ENCODE measurements at regions of chr4 and their contacts with region 1.

Region 1: DNA sequence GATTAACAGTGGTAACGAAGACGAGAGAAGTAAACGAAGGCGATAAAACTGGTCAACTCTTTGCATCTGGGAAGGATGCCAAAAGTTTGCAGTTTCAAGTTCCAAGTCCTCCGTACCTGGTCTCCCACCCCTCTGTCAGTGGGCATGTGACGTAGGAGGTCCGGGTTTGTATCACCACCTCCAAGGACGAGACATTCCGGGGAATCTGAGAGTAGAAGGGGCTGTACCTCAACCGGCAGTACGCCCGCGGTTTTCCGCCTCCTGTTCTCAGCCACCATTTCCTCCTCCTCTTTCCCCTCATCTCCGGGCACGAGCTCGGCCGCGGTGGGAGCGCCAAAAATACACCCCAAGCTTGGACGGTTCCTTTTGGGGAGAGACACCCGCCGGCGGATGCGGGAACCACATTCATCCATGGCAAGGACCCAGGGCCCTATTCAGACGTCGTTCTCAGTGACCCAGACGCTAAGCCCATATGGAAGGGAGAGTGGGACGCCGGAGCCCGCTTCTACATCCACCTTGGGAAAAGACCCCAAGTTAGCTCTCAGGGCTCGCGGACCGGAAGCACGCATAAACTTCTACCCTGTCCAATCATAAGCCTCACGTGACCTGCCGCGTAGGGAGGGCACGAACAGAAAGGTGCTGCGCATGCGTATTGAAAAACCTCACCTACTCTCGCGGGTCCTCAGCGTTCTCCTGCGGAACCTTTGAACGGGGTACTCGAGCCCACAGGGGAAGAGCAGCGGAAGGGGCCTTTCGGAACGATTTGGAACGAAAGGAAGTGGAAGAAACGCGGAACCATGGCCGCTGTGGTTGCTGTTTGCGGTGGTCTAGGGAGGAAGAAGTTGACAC is at the starts of genes HELQ and MRPS18C:
- DNase-seq: peak; percentile 94 to 99
- H3K4me3 ChIP-seq: peak within 1 kb of the TSS; percentile 85 to 89
- H3K27ac ChIP-seq: peak within 1 kb of the TSS; percentile 98 to 99
- H3K4me1 ChIP-seq: peaks cover 0 to 14% of the 10 kb centered on the region in 2 donors
- H3K27me3 ChIP-seq: no peaks in the 10 kb centered on the region
- CTCF ChIP-seq: peak in 2 of 3 experiments; percentile 26 to 42
- total RNA-seq, gene HELQ: 1.1 TPM
- total RNA-seq, gene MRPS18C: 13.0 TPM

Region 2: DNA sequence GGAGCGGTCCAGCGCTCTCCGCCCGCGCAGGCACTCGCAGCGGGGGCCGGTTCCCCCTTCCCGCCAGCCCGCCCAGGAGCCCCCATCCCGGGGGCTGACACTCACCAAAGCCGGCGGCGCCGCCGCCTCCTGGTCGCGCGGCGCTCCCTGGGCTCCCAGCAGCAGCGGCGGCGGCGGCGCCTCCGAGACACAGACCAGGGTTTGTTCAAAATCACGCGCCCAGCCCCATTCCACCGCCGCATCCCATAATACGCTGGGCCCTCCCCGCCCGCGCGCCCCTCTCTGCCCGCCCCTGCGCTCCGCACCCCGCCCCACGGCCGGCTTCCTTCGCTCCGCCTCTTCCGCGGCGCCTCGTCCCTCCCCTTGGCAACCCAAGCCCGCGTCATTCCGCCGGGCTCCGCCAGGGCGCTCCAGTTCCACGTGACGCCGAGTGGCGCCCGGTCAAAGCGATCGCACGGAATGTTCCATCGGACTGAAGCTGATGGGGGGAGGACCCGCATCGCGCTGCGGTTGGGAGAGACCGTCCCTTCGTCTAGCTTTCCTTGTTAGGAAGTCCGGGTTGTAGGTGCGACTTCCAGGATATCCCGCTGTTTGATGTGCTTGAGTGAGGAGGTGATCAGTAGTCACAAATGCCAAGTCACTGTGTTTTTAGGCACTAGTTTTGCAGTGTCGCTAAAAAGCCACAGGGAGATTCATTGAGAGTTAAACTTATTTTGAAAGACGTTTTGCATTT is 442.7 kb before region 1 on chr4:
- intact Hi-C with region 1: loop called (anchors 10 kb)
- DNase-seq: peak; percentile 75 to 97
- H3K4me3 ChIP-seq: peak overlapping the region; percentile 78 to 88
- H3K27ac ChIP-seq: peak overlapping the region; percentile 71 to 89
- H3K4me1 ChIP-seq: peaks cover 0 to 19% of the 10 kb centered on the region in 2 donors
- H3K27me3 ChIP-seq: no peaks in the 10 kb centered on the region
- CTCF ChIP-seq: peak; percentile 60 to 70 (median 63)

Region 3: GRCh38 chr4:83334425-83335241 is 120.9 kb before region 1 on chr4 and contains the start of gene HPSE:
- intact Hi-C with region 1: loop called (anchors 1 kb)
- DNase-seq: peak; percentile 54 to 91
- H3K4me3 ChIP-seq: peak within 1 kb of the TSS; percentile 66 to 86
- H3K27ac ChIP-seq: no peak within 1 kb of the TSS
- H3K4me1 ChIP-seq: peaks cover 3 to 5% of the 10 kb centered on the region in 2 donors
- H3K27me3 ChIP-seq: no peaks in the 10 kb centered on the region
- CTCF ChIP-seq: no peak
- total RNA-seq, gene HPSE: 1.7 TPM

Region 4: GRCh38 chr4:83535520-83536361 is 80.2 kb after region 1 on chr4 and contains the start of gene GPAT3:
- intact Hi-C with region 1: loop called (anchors 5 kb)
- DNase-seq: peak; percentile 19 to 90
- H3K4me3 ChIP-seq: peak within 1 kb of the TSS; percentile 82 to 86
- H3K27ac ChIP-seq: peak within 1 kb of the TSS; percentile 35 to 66
- H3K4me1 ChIP-seq: no peaks in the 10 kb centered on the region
- H3K27me3 ChIP-seq: no peaks in the 10 kb centered on the region
- CTCF ChIP-seq: no peak
- total RNA-seq, gene GPAT3: 1.5 TPM

Region 5: GRCh38 chr4:83569987-83570386 is 114.5 kb after region 1 on chr4:
- intact Hi-C with region 1: no loop called
- DNase-seq: no peak
- H3K4me3 ChIP-seq: no peak overlapping the region
- H3K27ac ChIP-seq: no peak overlapping the region
- H3K4me1 ChIP-seq: no peaks in the 10 kb centered on the region
- H3K27me3 ChIP-seq: no peaks in the 10 kb centered on the region
- CTCF ChIP-seq: no peak

Region 6: GRCh38 chr4:83917572-83917971 is 462.1 kb after region 1 on chr4:
- intact Hi-C with region 1: no loop called
- DNase-seq: no peak
- H3K4me3 ChIP-seq: no peak overlapping the region
- H3K27ac ChIP-seq: no peak overlapping the region
- H3K4me1 ChIP-seq: no peaks in the 10 kb centered on the region
- H3K27me3 ChIP-seq: no peaks in the 10 kb centered on the region
- CTCF ChIP-seq: no peak

Measured in ascending aorta (tissue), 2 donors.